Activated CD4-positive, alpha-beta memory T cell treated with anti-CD3 and anti-CD28 coated beads, Interleukin-2, amount 10 ng/mL, durations not matched to agents 7 days and 5 days (primary cell): ENCODE measurements at regions of chr17 and their contacts with region 1.

Region 1: GRCh38 chr17:40113110-40113906 is 8.5 kb upstream of the MSL1 start:
- DNase-seq: peak; percentile 95
- H3K4me3 Mint-ChIP-seq: peak overlapping the region; percentile 76
- H3K27ac Mint-ChIP-seq: peak overlapping the region; percentile 68
- H3K4me1 Mint-ChIP-seq: peaks cover 57% of the 10 kb centered on the region
- H3K27me3 Mint-ChIP-seq: no peaks in the 10 kb centered on the region

Region 2: GRCh38 chr17:40062329-40063186 is 50.8 kb before region 1 on chr17 and contains the start of gene THRA:
- CTCF ChIA-PET with region 1: interaction called, 23 read pairs
- POLR2A ChIA-PET with region 1: interaction called, 6 read pairs
- DNase-seq: peak; percentile 69
- H3K4me3 Mint-ChIP-seq: peak within 1 kb of the TSS; percentile 78
- H3K27ac Mint-ChIP-seq: peak within 1 kb of the TSS; percentile 35
- H3K4me1 Mint-ChIP-seq: peaks cover 35% of the 10 kb centered on the region
- H3K27me3 Mint-ChIP-seq: peaks cover 48% of the 10 kb centered on the region
- total RNA-seq, gene THRA: 8.4 TPM

Region 3: DNA sequence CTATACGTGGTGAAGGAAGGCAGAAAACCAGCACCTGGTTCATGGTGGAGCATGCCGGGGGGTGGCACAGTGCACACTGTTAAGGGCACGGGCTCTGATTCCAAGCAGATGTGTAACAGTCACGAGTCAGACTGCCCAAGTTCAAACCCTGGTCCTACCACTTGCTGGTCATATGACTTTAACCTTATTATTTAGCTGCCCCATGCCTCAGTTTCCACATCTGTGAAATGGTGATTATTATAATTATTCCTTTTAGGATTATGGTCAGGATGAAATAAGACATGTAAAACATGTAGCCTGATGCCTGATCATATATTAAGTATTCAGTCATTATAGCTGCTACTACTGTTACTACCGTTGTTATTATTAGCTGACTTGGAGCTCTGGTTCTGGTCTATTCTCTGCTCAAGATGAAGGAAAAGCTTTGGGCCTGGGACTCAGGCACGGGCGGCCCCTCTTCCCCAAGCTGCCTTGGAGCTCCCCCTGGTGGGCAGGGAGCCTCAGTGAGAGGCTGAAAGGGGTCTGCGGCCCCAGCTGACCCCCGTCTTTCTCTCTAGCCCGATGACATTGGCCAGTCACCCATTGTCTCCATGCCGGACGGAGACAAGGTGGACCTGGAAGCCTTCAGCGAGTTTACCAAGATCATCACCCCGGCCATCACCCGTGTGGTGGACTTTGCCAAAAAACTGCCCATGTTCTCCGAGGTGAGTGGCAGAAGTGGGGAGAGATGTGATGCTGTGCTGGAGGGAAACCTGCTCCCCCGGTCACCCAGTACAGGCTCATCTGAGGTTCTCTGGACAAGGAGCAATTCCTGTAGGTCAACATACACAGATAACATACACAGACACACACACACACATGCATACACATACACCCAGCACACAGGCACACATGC is 26.9 kb before region 1 on chr17:
- CTCF ChIA-PET with region 1: interaction called, 18 read pairs
- POLR2A ChIA-PET with region 1: no interaction called
- DNase-seq: peak; percentile 54
- H3K4me3 Mint-ChIP-seq: no peak overlapping the region
- H3K27ac Mint-ChIP-seq: no peak overlapping the region
- H3K4me1 Mint-ChIP-seq: no peaks in the 10 kb centered on the region
- H3K27me3 Mint-ChIP-seq: no peaks in the 10 kb centered on the region

Region 4: DNA sequence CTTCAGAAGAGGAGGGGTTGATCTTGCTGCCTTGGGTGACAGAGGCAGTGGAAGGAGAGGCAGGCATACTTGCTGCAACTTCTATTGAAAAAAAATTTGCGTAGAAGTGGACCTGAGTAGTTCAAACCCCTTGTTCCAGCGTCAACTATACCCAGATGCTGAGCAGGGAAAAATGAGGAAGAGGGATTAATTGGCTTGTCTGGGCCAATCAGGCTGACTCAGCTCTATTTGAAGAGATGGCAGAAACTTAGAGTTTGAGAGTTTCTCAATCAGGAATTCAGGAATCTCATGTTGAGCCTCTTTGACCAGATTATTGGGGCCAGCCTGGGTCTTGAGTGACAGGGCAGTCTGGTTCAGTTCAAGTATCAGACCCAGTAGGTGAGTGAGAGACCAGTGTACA is 44.7 kb after region 1 on chr17:
- CTCF ChIA-PET with region 1: interaction called, 13 read pairs
- POLR2A ChIA-PET with region 1: interaction called, 3 read pairs
- DNase-seq: no peak
- H3K4me3 Mint-ChIP-seq: no peak overlapping the region
- H3K27ac Mint-ChIP-seq: no peak overlapping the region
- H3K4me1 Mint-ChIP-seq: peaks cover 15% of the 10 kb centered on the region
- H3K27me3 Mint-ChIP-seq: no peaks in the 10 kb centered on the region

Region 5: DNA sequence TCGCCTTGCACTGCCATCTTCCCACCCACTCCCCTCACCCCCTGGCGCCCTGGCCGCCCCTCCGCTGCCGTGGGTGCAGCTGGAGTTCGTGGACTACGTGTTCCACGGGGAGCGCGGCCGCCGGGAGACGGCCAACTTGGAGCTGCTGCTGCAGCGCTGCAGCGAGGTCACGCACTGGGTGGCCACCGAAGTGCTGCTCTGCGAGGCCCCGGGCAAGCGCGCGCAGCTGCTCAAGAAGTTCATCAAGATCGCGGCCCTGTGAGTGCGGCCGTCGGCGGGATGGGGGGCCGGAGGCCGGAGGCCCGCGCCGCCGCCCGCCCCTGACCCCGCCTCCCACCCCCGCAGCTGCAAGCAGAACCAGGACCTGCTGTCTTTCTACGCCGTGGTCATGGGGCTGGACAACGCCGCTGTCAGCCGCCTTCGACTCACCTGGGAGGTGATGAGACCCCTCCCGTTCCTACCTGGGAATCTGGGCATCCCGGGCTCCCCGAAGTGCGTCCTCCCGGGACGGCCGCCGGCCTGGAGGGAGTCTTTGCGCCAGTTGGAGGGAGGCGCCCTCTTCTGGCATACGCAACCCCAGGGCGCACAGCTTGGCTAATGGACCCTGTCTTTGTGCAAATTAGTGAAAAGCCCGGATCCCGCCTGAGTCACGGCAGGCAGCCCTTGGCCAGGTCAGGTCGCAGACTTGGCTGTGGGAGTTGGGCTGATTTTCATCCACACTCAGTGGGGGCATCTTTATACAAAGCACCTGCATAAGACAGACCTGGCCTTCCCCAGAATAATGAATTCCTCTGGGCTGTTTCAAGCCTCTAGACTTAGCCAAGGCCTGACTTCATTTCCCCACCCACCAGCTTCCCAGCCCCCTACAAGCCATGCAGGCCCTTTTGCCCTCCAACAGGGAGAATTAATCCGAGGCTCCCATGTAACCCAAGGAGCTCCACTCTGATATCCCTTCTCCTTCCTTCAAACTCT is 78.2 kb after region 1 on chr17:
- CTCF ChIA-PET with region 1: interaction called, 69 read pairs
- POLR2A ChIA-PET with region 1: interaction called, 10 read pairs
- DNase-seq: peak; percentile 75
- H3K4me3 Mint-ChIP-seq: peak overlapping the region; percentile 94
- H3K27ac Mint-ChIP-seq: no peak overlapping the region
- H3K4me1 Mint-ChIP-seq: peaks cover 15% of the 10 kb centered on the region
- H3K27me3 Mint-ChIP-seq: peaks cover 2% of the 10 kb centered on the region